H1 (cell line): ENCODE measurements at regions of chr14 and their contacts with region 1.

Region 1: GRCh38 chr14:78902010-78902623 is 731.9 kb downstream of the NRXN3 start:
- DNase-seq: peak in 1 of 2 experiments; percentile 63
- H3K4me3 ChIP-seq: no peak overlapping the region
- H3K27ac ChIP-seq: no peak overlapping the region
- H3K4me1 ChIP-seq: peaks cover 0 to 5% (median 3%) of the 10 kb centered on the region in 4 experiments; a peak in 2 of 7 replicates
- H3K27me3 ChIP-seq: no peaks in the 10 kb centered on the region
- CTCF ChIP-seq: peak; percentile 61 to 73 (median 69)
- EP300 ChIP-seq: no peak
- POLR2A ChIP-seq: no peak
- RAD21 ChIP-seq: peak; percentile 63 to 74

Region 2: GRCh38 chr14:78785265-78785664 is 116.9 kb before region 1 on chr14:
- CTCF ChIA-PET with region 1: interaction called, 30 read pairs
- POLR2A ChIA-PET with region 1: no interaction called
- DNase-seq: no peak
- H3K4me3 ChIP-seq: no peak overlapping the region
- H3K27ac ChIP-seq: no peak overlapping the region
- H3K4me1 ChIP-seq: peaks cover 0 to under 1% (median 0%) of the 10 kb centered on the region in 4 experiments; a peak in 1 of 7 replicates
- H3K27me3 ChIP-seq: no peaks in the 10 kb centered on the region
- CTCF ChIP-seq: no peak
- EP300 ChIP-seq: no peak
- POLR2A ChIP-seq: no peak
- RAD21 ChIP-seq: no peak

Region 3: DNA sequence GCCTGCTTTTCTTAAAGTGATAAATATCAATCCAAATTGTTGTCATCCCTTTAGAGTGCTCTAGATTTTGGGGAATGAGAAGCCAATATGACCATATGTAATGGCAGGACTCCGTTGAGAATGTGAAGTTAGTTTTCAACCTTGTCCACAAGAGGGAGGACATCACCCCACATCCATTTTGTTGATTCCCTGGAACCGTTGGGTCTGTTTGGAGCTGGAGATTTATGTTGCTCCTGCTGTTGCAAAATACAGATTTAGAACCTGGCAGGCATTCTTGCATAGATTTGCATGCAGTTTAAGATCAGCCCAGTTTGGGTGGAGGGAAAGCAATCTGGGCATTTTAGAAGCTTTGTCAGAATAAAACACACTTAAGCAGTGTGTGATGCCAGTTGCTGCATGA is 111.8 kb before region 1 on chr14:
- CTCF ChIA-PET with region 1: interaction called, 30 read pairs
- POLR2A ChIA-PET with region 1: interaction called, 3 read pairs
- DNase-seq: no peak
- H3K4me3 ChIP-seq: no peak overlapping the region
- H3K27ac ChIP-seq: no peak overlapping the region
- H3K4me1 ChIP-seq: peaks cover 0 to 3% (median 0%) of the 10 kb centered on the region in 4 experiments; a peak in 1 of 7 replicates
- H3K27me3 ChIP-seq: no peaks in the 10 kb centered on the region
- CTCF ChIP-seq: peak; percentile 13 to 71 (median 52)
- EP300 ChIP-seq: no peak
- POLR2A ChIP-seq: no peak
- RAD21 ChIP-seq: peak; percentile 48 to 54

Region 4: DNA sequence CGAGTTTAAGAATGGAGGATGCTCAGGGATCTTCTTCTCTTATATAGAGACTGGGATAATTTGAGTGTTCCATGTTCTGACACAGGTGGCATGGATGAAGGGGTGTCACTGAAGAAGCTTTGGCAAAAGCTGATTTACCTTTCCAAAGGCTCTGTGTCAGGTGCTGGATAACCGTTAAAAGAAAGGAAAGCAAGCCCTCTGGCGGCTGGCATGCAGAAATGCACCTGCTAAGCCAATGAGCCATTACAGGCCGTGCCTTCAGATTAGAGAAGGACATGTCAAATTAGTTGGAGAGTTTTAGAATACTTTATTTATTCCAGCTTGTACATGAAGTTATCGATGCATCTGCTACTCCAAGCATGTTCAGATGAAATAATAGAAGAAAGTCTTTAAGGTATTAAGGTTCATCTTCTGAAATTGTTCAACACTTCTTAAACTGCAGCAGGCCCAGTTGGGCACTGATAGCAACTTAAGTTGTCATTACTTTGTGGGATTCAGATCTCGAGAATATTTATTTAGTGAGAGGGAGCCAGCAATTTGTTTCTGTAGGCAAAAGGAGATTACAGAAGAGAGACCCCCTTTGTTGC is 53.8 kb before region 1 on chr14:
- CTCF ChIA-PET with region 1: interaction called, 45 read pairs
- POLR2A ChIA-PET with region 1: no interaction called
- DNase-seq: peak in 1 of 2 experiments; percentile 70
- H3K4me3 ChIP-seq: no peak overlapping the region
- H3K27ac ChIP-seq: no peak overlapping the region
- H3K4me1 ChIP-seq: peaks cover 1 to 14% (median 6%) of the 10 kb centered on the region in 4 experiments; a peak in 4 of 7 replicates
- H3K27me3 ChIP-seq: no peaks in the 10 kb centered on the region
- CTCF ChIP-seq: peak; percentile 65 to 96 (median 81)
- EP300 ChIP-seq: no peak
- POLR2A ChIP-seq: no peak
- RAD21 ChIP-seq: peak; percentile 67 to 71

Region 5: GRCh38 chr14:78857974-78858373 is 44.1 kb before region 1 on chr14:
- CTCF ChIA-PET with region 1: interaction called, 10 read pairs
- POLR2A ChIA-PET with region 1: no interaction called
- DNase-seq: no peak
- H3K4me3 ChIP-seq: no peak overlapping the region
- H3K27ac ChIP-seq: no peak overlapping the region
- H3K4me1 ChIP-seq: peaks cover 0 to 4% (median 1%) of the 10 kb centered on the region in 4 experiments; a peak in 2 of 7 replicates
- H3K27me3 ChIP-seq: no peaks in the 10 kb centered on the region
- CTCF ChIP-seq: no peak
- EP300 ChIP-seq: no peak
- POLR2A ChIP-seq: no peak
- RAD21 ChIP-seq: no peak

Region 6: DNA sequence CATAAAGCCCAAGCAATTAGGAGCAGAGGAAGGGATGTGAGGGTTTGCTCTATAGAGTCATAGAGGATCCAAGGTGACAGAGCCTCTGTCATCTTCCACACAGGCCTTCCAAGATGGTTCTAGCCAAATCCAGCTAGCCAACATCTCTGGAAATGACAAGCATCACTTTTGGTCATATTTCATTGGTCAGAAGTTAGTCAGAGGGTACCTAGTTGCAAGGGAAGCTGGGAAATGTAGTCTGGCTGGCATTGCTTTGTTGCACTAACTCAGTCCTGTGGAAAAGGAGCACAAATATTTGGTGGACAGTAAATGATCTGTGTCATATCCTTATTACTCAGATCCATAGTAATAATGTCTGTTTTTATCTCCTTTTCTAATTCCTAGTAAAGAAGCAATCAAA is 16.2 kb before region 1 on chr14:
- CTCF ChIA-PET with region 1: interaction called, 18 read pairs
- POLR2A ChIA-PET with region 1: no interaction called
- DNase-seq: no peak
- H3K4me3 ChIP-seq: no peak overlapping the region
- H3K27ac ChIP-seq: no peak overlapping the region
- H3K4me1 ChIP-seq: no peaks in the 10 kb centered on the region
- H3K27me3 ChIP-seq: no peaks in the 10 kb centered on the region
- CTCF ChIP-seq: no peak
- EP300 ChIP-seq: no peak
- POLR2A ChIP-seq: no peak
- RAD21 ChIP-seq: no peak

Region 7: GRCh38 chr14:78891263-78891662 is 10.9 kb before region 1 on chr14:
- CTCF ChIA-PET with region 1: interaction called, 18 read pairs
- POLR2A ChIA-PET with region 1: no interaction called
- DNase-seq: no peak
- H3K4me3 ChIP-seq: no peak overlapping the region
- H3K27ac ChIP-seq: no peak overlapping the region
- H3K4me1 ChIP-seq: peaks cover 3 to 10% (median 4%) of the 10 kb centered on the region in 4 experiments; a peak in 3 of 7 replicates
- H3K27me3 ChIP-seq: no peaks in the 10 kb centered on the region; a peak in 1 of 7 replicates
- CTCF ChIP-seq: no peak
- EP300 ChIP-seq: no peak
- POLR2A ChIP-seq: no peak
- RAD21 ChIP-seq: no peak